Activated CD4-positive, alpha-beta T cell treated with anti-CD3 and anti-CD28 coated beads, Interleukin-2, amount 10 ng/mL, durations not matched to agents 7 days and 5 days (primary cell): ENCODE measurements at regions of chr15 and their contacts with region 1.

Region 1: GRCh38 chr15:34223904-34224596 is 766 bp upstream of the EMC4 start:
- DNase-seq: no peak
- H3K4me3 Mint-ChIP-seq: peak overlapping the region; percentile 87
- H3K27ac Mint-ChIP-seq: peak overlapping the region; percentile 94
- H3K4me1 Mint-ChIP-seq: peaks cover 34% of the 10 kb centered on the region
- H3K27me3 Mint-ChIP-seq: peaks cover 5% of the 10 kb centered on the region

Region 2: DNA sequence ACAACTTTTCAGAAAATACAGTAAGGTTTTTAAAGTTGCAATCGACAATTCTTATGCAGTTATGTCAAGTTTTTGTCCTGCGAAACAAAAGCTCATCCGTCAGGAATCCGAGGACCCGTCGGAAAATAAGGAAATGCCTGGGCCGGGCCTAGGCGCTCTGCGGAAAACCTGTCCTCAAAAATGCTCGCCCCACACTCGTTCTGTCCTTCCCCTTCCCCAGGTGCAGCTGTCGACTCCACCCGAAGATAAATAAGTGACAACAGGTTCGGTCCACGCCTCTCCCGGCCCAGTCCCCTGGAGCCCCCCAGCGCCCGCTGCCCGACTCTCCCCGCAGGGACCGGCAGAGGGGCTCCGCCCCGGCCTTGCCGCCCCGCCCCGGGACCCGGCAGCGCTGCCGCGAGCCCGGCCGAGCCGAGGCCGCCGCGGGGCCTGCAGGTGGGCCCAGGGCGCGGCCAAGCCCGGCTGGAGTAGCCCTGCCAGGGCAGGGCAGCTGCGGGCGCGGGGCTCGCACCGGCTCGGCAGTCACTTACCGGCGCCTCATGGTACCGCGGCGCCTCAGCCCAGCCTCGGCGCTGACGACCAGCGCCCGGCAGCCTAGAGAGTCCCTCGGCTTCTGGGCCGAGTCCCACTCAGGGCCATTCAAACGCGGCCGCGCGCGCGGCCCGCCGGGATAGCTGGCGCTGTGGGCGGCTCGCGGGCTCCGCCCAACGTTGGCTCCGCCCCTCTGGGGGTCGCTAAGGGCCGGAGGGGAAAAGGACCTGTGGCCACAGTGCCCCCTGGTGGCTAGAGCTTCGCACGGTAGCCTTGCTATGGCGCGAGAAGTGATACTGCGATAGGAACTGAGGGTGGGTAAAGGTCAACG is 14.4 kb before region 1 on chr15 and contains the start of gene KATNBL1:
- CTCF ChIA-PET with region 1: interaction called, 19 read pairs
- POLR2A ChIA-PET with region 1: no interaction called
- DNase-seq: peak; percentile 97
- H3K4me3 Mint-ChIP-seq: peak within 1 kb of the TSS; percentile 94
- H3K27ac Mint-ChIP-seq: peak within 1 kb of the TSS; percentile 94
- H3K4me1 Mint-ChIP-seq: peaks cover 18% of the 10 kb centered on the region
- H3K27me3 Mint-ChIP-seq: no peaks in the 10 kb centered on the region
- total RNA-seq, gene KATNBL1: 40.8 to 45.7 TPM